Dendritic cell treated with granulocyte-macrophage colony-stimulating factor and Interleukin-4, amounts not matched to agents 40 ng/mL and 50 ng/mL, for 4 days (primary cell): ENCODE measurements at regions of chr5 and their contacts with region 1.

Region 1: DNA sequence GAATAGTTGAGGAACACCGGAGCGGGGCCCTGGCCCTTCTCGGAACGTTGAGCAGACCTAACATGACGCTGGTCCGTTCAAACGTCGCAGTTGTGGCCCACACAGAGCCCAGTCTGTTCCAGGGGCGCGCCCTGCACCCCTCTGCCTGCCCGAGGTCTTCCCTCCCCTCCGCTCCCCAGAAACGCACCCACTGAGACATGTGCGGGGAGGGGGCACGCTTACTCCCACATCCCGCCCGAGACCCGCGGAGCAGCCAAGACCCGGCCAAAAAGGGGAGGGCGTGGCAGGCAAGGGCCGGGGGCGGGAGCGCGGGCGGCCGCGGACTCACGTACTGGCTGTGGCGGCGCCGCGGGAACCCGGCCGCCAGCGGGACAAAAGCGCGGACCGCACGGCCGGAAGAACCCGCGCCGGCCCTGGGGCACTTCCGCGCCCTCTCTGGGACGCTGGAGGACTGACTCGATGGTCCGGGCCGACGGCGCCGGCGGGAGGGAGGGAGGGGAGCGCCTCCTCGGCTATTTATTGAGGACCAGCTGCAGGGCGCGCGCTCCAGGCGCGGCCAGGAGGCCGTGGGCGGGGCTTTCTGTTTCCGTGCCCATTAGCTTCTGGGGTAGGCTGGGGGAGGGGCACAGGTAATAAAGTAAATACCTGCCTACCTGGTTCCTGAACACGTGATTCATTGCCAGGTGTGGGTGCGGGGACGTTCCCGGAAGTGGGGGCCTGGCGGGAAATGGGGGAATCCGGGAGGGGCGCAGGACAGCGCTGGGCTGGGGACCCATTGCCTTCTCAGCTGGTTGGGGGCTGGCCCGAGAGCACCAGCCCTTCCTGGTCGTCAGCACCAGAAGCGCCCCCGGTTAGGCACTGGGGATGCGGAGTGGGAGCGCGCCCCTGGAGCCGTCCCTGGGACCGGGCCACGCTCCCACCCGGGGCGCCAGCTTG is at the start of gene ZFP62:
- H3K4me3 Mint-ChIP-seq: peak within 1 kb of the TSS; percentile 91
- H3K27ac Mint-ChIP-seq: peak within 1 kb of the TSS; percentile 88
- H3K4me1 Mint-ChIP-seq: peaks cover 22% of the 10 kb centered on the region
- H3K27me3 Mint-ChIP-seq: peaks cover 5% of the 10 kb centered on the region

Region 2: DNA sequence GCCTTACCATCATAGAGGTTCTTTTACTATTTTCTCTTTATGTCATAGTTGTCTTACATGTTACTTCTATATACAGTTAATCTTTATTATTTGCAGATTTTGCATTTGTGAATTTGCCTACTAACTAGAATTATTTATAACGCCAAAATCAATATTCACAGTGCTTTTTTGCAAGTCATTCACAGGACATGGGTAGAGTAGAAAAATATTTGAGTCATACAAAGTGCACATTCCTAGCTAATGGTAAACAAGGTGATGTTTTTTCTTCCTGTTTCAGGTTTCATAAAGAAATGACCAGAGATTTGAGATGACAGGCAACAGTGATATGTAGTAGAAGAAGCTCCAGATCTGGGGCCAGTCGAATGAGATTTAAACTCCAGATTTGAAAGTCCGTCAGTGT is 91.3 kb before region 1 on chr5:
- intact Hi-C with region 1: no loop called
- H3K4me3 Mint-ChIP-seq: no peak overlapping the region
- H3K27ac Mint-ChIP-seq: no peak overlapping the region
- H3K4me1 Mint-ChIP-seq: no peaks in the 10 kb centered on the region
- H3K27me3 Mint-ChIP-seq: peaks cover 12% of the 10 kb centered on the region

Region 3: GRCh38 chr5:180802325-180803180 is 58.6 kb before region 1 on chr5 and contains the start of gene MGAT1:
- intact Hi-C with region 1: loop called (anchors 5 kb)
- H3K4me3 Mint-ChIP-seq: peak within 1 kb of the TSS; percentile 94
- H3K27ac Mint-ChIP-seq: peak within 1 kb of the TSS; percentile 97
- H3K4me1 Mint-ChIP-seq: peaks cover 82% of the 10 kb centered on the region
- H3K27me3 Mint-ChIP-seq: no peaks in the 10 kb centered on the region

Region 4: DNA sequence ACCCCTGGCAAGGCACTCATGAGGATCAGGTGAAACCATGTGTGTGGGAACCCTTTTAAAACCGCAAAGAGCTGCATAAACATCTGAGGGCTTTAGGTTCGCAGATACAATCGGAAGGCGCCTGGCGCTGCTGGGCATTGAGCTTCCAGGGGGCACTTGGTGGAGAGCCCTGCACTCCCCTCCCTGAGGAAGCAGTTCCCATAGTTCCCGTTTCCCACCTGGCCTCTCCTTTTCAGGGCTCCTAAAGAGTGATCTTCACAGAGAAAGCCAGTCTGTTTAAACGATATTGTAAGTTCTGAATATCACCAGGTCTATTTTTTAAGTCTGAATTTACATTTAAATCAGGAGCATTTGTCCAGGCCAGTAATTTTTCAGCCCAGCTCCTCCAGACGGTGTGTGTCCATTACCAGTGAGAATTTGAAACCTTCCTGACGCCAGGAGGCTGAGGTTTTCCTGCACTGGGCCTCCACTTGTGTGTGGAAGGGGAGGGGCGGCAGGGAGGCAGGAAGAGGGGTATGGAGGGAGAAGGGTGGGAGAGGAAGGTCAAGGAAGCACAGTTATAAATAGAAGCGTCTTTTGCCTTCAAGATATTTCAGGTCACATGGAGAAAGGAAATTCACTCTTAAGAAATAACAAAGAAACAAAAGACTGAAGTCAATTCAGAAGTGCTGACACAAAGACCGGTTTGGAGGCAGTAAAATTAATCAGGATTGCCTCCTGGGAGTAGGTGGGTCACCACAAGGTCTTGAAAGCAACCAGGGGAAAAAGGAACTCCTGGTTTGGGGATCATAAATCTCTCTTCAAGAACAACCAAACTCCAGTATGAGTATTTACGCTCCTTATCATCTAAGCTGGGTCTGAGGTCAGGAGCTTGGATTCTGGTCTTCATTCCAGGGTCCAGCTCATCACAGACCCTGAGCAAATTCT is 44.3 kb before region 1 on chr5:
- intact Hi-C with region 1: loop called (anchors 5 kb)
- H3K4me3 Mint-ChIP-seq: peak overlapping the region; percentile 11
- H3K27ac Mint-ChIP-seq: peak overlapping the region; percentile 91
- H3K4me1 Mint-ChIP-seq: peaks cover 77% of the 10 kb centered on the region
- H3K27me3 Mint-ChIP-seq: no peaks in the 10 kb centered on the region